Common myeloid progenitor, CD34-positive (primary cell): ENCODE measurements at regions of chr19 and their contacts with region 1.

Region 1: GRCh38 chr19:43668406-43669158 is 1.4 kb downstream of the PLAUR start:
- DNase-seq: peak; percentile 98 to 99 (median 99)
- H3K4me3 ChIP-seq: peak overlapping the region; percentile 38 to 84 (median 73)
- H3K27ac ChIP-seq: peak overlapping the region in 1 of 2 experiments; percentile 64
- H3K4me1 ChIP-seq: peaks cover 13 to 57% (median 44%) of the 10 kb centered on the region in 4 experiments
- H3K27me3 ChIP-seq: no peaks in the 10 kb centered on the region

Region 2: GRCh38 chr19:43619262-43620060 is 49.1 kb before region 1 on chr19 and contains the start of gene ZNF428:
- CTCF ChIA-PET with region 1: no interaction called
- POLR2A ChIA-PET with region 1: no interaction called
- DNase-seq: peak; percentile 92 to 96 (median 95)
- H3K4me3 ChIP-seq: peak within 1 kb of the TSS; percentile 65 to 93 (median 82)
- H3K27ac ChIP-seq: peak within 1 kb of the TSS; percentile 83 to 92
- H3K4me1 ChIP-seq: peaks cover 2 to 22% (median 20%) of the 10 kb centered on the region in 4 experiments
- H3K27me3 ChIP-seq: no peaks in the 10 kb centered on the region

Region 3: GRCh38 chr19:43636121-43636683 is 32.4 kb before region 1 on chr19:
- CTCF ChIA-PET with region 1: no interaction called
- POLR2A ChIA-PET with region 1: no interaction called
- DNase-seq: no peak
- H3K4me3 ChIP-seq: no peak overlapping the region
- H3K27ac ChIP-seq: no peak overlapping the region
- H3K4me1 ChIP-seq: peaks cover 0 to 18% (median 15%) of the 10 kb centered on the region in 4 experiments
- H3K27me3 ChIP-seq: peaks cover 5 to 61% (median 33%) of the 10 kb centered on the region in 5 experiments

Region 4: DNA sequence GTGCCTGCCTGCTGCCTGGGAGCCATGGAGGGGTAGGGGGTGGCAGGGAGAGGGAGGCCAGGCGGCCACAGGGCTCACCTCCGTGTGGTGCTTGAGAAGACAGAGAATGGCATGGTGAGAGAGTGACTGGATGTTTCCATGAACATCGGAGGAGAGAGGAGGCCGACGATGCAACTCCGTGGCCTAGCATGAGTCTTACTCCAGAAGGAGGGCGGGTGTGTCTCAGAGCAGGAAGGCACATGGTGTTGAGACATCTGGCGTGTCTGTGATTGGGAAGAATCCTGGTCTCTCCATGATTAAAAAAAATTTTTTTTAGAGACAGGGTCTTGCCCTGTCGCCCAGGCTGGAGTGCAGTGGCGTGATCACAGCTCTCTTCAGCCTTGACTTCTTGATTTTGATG is 52.4 kb after region 1 on chr19:
- CTCF ChIA-PET with region 1: interaction called, 12 read pairs
- POLR2A ChIA-PET with region 1: interaction called, 5 read pairs
- DNase-seq: no peak
- H3K4me3 ChIP-seq: no peak overlapping the region
- H3K27ac ChIP-seq: no peak overlapping the region
- H3K4me1 ChIP-seq: peaks cover 6 to 23% (median 13%) of the 10 kb centered on the region in 4 experiments
- H3K27me3 ChIP-seq: no peaks in the 10 kb centered on the region

Region 5: GRCh38 chr19:43820098-43820883 is 151.7 kb after region 1 on chr19:
- CTCF ChIA-PET with region 1: no interaction called
- POLR2A ChIA-PET with region 1: no interaction called
- DNase-seq: peak; percentile 26 to 86 (median 84)
- H3K4me3 ChIP-seq: peak overlapping the region; percentile 25 to 77 (median 55)
- H3K27ac ChIP-seq: no peak overlapping the region
- H3K4me1 ChIP-seq: peaks cover 0 to 14% (median 8%) of the 10 kb centered on the region in 4 experiments
- H3K27me3 ChIP-seq: peaks cover 0 to 23% (median 15%) of the 10 kb centered on the region in 5 experiments

Region 6: DNA sequence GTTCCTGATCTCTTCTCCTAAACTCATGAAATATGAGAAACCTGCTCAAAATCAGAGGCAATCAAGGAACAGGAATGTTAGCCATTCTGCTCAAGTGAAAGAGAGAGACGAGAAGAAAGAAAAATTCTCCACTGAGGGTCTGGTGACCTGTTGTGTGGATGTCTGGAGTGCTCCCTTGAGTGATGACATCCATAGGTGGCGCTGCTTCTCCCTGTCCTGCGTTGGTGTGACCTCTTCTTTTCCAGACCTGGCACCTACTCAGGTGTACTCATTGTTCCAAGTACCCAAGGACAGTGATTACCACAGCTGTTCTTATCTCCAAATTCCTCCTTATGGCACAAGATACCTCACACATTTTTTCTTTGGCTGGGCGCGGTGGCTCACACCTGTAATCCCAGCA is 387.3 kb after region 1 on chr19:
- CTCF ChIA-PET with region 1: no interaction called
- POLR2A ChIA-PET with region 1: no interaction called
- DNase-seq: no peak
- H3K4me3 ChIP-seq: no peak overlapping the region
- H3K27ac ChIP-seq: no peak overlapping the region
- H3K4me1 ChIP-seq: peaks cover 6 to 14% (median 10%) of the 10 kb centered on the region in 4 experiments
- H3K27me3 ChIP-seq: no peaks in the 10 kb centered on the region